Motor neuron (in vitro differentiated cells): ENCODE measurements at regions of chr10 and their contacts with region 1.

Region 1: GRCh38 chr10:120969219-120969645 is 118.1 kb downstream of the WDR11 start:
- ATAC-seq: no peak
- H3K4me3 ChIP-seq: no peak overlapping the region
- H3K27ac ChIP-seq: no peak overlapping the region
- H3K4me1 ChIP-seq: peaks cover 4 to 12% of the 10 kb centered on the region in 2 donors

Region 2: GRCh38 chr10:120841522-120842189 is 127.6 kb before region 1 on chr10:
- in situ Hi-C with region 1: no loop called
- ATAC-seq: no peak
- H3K4me3 ChIP-seq: no peak overlapping the region
- H3K27ac ChIP-seq: no peak overlapping the region
- H3K4me1 ChIP-seq: no peaks in the 10 kb centered on the region

Region 3: GRCh38 chr10:121069061-121069850 is 100.0 kb after region 1 on chr10:
- in situ Hi-C with region 1: no loop called
- ATAC-seq: peak in 3 of 8 experiments; percentile 96 to 97 (median 96)
- H3K4me3 ChIP-seq: no peak overlapping the region
- H3K27ac ChIP-seq: no peak overlapping the region
- H3K4me1 ChIP-seq: peaks cover 0 to 15% of the 10 kb centered on the region in 2 donors

Region 4: GRCh38 chr10:121310151-121310711 is 341.0 kb after region 1 on chr10:
- in situ Hi-C with region 1: loop called in 1 of 9 experiments (anchors 25 kb)
- ATAC-seq: peak in 5 of 8 experiments; percentile 38 to 98 (median 87)
- H3K4me3 ChIP-seq: no peak overlapping the region
- H3K27ac ChIP-seq: no peak overlapping the region
- H3K4me1 ChIP-seq: peaks cover 16 to 28% of the 10 kb centered on the region in 2 donors

Region 5: DNA sequence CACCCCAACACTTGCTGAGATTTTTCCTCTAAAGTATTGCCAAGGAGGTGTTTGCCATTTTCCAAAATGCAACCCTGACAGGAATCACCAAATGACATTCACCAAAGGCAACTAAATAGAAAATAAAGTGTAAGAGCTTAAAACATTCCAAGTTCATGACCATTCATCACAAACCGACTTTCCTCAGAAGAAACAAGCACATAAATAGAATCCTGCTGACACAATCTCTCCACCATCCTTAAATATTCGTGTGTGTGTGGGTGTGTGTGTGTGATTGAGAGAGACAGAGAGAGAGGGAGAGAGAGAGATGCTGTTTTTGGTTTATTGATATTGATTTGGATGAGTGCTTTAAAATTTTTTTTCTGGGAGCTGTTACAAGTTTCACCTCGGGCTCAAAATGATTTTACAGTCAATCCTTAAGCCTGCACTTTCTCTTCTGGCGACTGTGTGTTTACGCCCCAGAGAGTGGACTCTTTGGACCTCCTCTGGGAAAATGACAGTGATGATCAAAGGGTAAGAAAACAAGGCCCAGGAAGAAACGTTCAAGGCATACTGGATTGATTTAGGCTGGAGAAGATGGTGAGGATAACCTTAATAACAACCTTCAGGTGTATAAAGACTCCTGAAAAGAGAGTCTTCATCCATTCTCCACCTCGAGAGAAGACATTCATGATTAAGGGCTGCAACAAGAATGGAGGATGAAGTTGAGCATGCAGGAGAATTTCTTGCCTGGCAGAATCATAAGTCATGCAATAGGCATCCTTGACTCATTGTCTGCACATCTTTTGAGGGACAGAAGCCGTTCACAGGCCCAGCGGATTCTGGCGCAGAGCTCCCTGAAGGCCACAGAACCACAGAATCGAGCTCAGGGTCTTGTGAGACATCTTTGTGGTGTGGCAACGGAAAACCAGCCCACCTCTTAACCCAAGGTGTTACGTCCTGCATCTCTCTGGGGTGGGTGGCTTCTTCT is 733.4 kb after region 1 on chr10:
- in situ Hi-C with region 1: loop called in 1 of 9 experiments (anchors 25 kb)
- ATAC-seq: no peak
- H3K4me3 ChIP-seq: no peak overlapping the region
- H3K27ac ChIP-seq: no peak overlapping the region
- H3K4me1 ChIP-seq: peaks cover 0 to 8% of the 10 kb centered on the region in 2 donors